Panc1 (cell line): ENCODE measurements at regions of chr11 and their contacts with region 1.

Region 1: DNA sequence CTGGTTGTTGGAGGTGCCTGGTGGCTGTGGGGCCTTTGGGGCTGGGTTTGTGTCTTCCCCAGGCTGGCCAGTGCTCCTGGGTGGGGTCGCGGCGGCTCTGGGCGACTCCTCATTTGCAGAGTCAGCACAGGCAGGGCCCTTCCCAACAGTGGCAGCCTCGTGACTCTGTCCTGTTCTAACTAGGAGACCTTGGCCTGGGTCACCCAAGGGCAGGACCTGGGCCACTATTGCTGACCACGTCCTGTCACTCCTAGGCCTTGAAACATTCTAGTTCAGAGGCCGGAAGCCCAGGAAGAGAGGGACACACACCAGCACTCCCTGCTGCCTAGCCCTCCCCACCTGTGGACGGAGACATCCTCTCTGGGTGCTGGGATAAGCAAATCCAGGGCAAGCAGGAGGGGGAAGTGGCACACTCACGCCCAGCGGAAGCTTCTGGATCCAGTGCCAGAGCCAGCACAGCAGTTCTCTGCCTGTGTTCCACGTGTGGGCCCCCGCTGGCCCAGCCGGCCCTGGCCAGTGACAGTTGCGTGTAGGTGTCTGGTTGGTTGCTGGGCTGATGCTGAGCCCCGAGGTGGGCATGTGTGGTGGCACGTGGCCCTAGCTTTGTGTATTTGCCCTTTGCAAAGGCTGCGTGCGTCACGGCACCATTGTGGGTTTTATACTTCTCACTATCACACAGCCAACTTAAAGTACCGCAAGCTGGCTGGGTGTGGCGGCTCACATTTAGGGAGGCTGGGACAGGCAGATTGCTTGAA is 4.3 kb upstream of the CHID1 start:
- DNase-seq: no peak
- ATAC-seq: no peak
- H3K4me3 ChIP-seq: no peak overlapping the region
- H3K27ac ChIP-seq: no peak overlapping the region
- H3K4me1 ChIP-seq: peaks cover 10% of the 10 kb centered on the region
- H3K27me3 ChIP-seq: no peaks in the 10 kb centered on the region
- CTCF ChIP-seq: no peak

Region 2: DNA sequence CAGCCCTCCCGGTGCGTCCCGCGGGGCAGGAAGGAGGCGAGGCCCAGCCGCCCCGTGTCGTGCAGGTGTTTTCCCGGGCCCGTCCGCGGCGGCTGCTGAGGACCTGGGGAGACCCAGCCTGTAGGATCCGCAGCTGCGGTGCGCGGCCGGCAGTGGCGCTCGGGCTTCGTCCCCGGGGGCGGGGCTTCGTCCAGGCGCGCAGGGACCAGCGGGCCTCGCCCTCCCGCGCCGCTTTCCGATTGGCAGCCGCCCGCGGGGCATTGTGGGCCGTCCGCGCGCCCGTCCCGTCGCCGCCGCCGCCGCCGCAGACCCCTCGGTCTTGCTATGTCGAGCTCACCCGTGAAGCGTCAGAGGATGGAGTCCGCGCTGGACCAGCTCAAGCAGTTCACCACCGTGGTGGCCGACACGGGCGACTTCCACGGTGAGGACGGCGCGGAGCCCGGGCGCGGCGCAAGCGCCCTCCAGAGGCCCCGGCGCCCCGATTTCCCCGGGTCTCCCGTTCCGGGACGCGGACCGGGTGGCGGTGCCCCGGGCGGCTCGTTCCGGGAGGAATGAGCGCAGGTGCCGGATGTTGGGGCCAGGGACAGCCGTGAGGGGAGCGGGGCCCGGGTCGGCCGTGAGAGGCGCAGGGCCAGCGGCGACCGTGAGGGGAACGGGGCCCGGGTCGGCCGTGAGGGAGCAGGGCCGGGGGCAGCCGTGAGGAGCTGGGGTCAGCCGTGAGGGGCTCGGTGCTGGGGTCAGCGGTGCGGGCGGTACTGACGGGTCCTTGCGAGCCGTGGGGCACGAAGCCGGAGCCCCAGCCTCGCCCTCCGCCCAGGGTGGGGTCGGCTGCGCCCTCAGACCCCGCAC is 167.5 kb before region 1 on chr11 and contains the start of gene TALDO1:
- CTCF ChIA-PET with region 1: no interaction called
- POLR2A ChIA-PET with region 1: no interaction called
- in situ Hi-C with region 1: no loop called
- intact Hi-C with region 1: no loop called
- DNase-seq: no peak
- ATAC-seq: peak; percentile 98
- H3K4me3 ChIP-seq: peak within 1 kb of the TSS; percentile 83 to 87
- H3K27ac ChIP-seq: peak within 1 kb of the TSS; percentile 88
- H3K4me1 ChIP-seq: peaks cover 20% of the 10 kb centered on the region
- H3K27me3 ChIP-seq: no peaks in the 10 kb centered on the region
- CTCF ChIP-seq: no peak; the same call in 1 of the 2 replicates
- total RNA-seq, gene TALDO1: 257 TPM

Region 3: GRCh38 chr11:1131033-1131911 is 216.3 kb after region 1 on chr11:
- CTCF ChIA-PET with region 1: no interaction called
- POLR2A ChIA-PET with region 1: interaction called, 13 read pairs
- in situ Hi-C with region 1: no loop called
- intact Hi-C with region 1: no loop called
- DNase-seq: no peak
- ATAC-seq: no peak
- H3K4me3 ChIP-seq: no peak overlapping the region
- H3K27ac ChIP-seq: no peak overlapping the region
- H3K4me1 ChIP-seq: 0 out of 2 replicates have a peak, but pooled peaks cover 10% of the 10 kb centered on the region
- H3K27me3 ChIP-seq: no peaks in the 10 kb centered on the region
- CTCF ChIP-seq: no peak